Activated T-helper 1 cell treated with anti-CD3 and anti-CD28 coated beads, Interleukin-12 subunit alpha, Interleukin-12 subunit beta, Interleukin-2, Interleukin-4 antibody, amounts not matched to agents 30 ng/mL and 10 ng/mL and 1 ng/mL, durations not matched to agents 14 hours and 24 hours and 36 hours (primary cell): ENCODE measurements at regions of chr6 and their contacts with region 1.

Region 1: GRCh38 chr6:100105138-100105753 is 111.2 kb upstream of the MCHR2 start:
- DNase-seq: no peak
- H3K4me3 Mint-ChIP-seq: no peak overlapping the region
- H3K27ac Mint-ChIP-seq: no peak overlapping the region
- H3K4me1 Mint-ChIP-seq: no peaks in the 10 kb centered on the region
- H3K27me3 Mint-ChIP-seq: peaks cover 16% of the 10 kb centered on the region

Region 2: GRCh38 chr6:99668036-99668705 is 437.1 kb before region 1 on chr6:
- intact Hi-C with region 1: no loop called
- DNase-seq: no peak
- H3K4me3 Mint-ChIP-seq: no peak overlapping the region
- H3K27ac Mint-ChIP-seq: no peak overlapping the region
- H3K4me1 Mint-ChIP-seq: no peaks in the 10 kb centered on the region
- H3K27me3 Mint-ChIP-seq: peaks cover 7% of the 10 kb centered on the region

Region 3: GRCh38 chr6:100664274-100665040 is 559.2 kb after region 1 on chr6:
- intact Hi-C with region 1: loop called (anchors 2 kb)
- DNase-seq: no peak
- H3K4me3 Mint-ChIP-seq: no peak overlapping the region
- H3K27ac Mint-ChIP-seq: peak overlapping the region; percentile 32
- H3K4me1 Mint-ChIP-seq: peaks cover 10% of the 10 kb centered on the region
- H3K27me3 Mint-ChIP-seq: no peaks in the 10 kb centered on the region